T-cell (primary cell): ENCODE measurements at regions of chr2 and their contacts with region 1.

Region 1: DNA sequence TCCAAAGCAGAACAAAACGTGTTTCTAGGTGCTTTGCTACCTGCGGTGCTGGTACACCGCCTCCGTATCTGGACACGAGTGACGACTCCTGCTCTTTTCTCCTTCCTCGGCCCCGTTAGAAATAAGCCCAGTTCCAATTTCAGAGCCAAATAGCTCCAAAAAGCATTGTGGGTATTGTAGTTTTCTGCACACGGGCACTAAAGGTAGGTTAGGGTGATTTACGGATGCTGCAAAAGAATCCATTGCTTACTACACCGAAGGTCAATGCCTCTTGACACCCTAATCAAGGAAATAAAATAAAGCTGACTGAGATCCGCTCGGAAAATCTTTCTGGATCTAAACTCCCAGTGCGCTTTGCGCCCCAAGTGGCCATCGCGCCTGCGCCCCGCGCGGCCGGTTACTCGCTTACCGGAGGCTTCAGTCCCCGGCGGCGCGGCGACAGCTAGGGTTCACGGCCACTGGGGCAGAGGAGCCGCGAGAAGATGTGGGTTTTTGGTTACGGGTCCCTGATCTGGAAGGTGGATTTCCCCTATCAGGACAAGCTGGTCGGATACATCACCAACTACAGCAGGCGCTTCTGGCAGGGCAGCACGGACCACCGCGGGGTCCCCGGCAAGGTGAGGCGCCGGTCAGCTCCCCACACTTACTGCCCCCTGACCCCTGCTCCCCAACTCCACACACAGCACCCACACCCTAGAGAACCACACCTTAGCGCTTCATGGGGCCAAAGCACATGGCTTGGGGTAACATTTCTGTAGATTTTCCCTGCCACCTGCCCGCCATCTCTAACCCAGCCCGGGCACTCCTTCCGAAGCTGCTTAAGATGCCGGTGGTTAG is at the start of gene CHAC2:
- DNase-seq: peak; percentile 61 to 90 (median 82)
- ATAC-seq: peak; percentile 91 to 94 (median 93)
- H3K4me3 ChIP-seq: peak within 1 kb of the TSS; percentile 95
- H3K4me3 Mint-ChIP-seq: peak within 1 kb of the TSS; percentile 93 to 97 (median 93)
- H3K27ac ChIP-seq: peak within 1 kb of the TSS; percentile 90
- H3K27ac Mint-ChIP-seq: peak within 1 kb of the TSS; percentile 88 to 91
- H3K4me1 ChIP-seq: peaks cover 3 to 7% of the 10 kb centered on the region in 2 experiments
- H3K4me1 Mint-ChIP-seq: peaks cover 29 to 37% (median 35%) of the 10 kb centered on the region in 3 donors
- H3K27me3 ChIP-seq: no peaks in the 10 kb centered on the region
- H3K27me3 Mint-ChIP-seq: no peaks in the 10 kb centered on the region
- total RNA-seq, gene CHAC2: 1.4 to 3.7 (median 2.7) TPM

Region 2: DNA sequence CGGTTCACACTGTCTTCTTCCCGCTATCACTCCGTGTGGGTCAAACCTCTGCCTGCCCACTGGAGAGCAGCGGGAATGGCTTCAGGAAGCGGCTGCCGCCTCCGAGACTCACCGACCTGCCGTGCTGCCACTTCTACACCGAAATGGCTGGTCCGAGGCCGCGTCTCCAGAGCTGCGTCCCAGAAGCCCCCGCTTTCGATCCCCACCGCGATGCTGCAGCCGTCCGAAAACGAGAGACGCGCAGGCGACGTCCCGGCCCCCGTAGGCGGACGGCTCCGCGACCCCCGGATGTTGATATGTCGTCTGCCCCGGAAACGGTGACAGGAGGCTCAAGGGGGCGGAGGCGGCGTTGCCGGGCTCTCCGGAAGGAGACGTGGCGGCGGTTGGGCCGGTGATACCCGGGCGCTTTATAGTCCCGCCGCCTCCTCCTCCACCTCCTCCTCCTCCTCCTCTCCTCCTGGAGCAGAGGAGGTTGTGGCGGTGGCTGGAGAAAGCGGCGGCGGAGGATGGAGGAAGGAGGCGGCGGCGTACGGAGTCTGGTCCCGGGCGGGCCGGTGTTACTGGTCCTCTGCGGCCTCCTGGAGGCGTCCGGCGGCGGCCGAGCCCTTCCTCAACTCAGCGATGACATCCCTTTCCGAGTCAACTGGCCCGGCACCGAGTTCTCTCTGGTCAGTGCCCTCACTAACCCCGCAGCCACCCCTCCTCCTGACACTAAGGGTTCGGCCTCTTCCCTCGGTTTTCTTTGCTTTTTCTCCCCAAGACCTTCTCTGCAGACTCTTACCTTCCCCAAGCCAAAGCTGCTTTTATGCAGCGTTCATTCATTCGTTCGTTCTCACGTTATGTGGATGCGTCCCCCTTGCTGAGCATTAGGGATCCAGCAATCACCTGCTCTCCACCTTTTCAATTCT is 19.3 kb after region 1 on chr2 and contains the starts of genes ASB3 and ERLEC1:
- CTCF ChIA-PET with region 1: interaction called in 1 of 2 experiments, 21 read pairs
- POLR2A ChIA-PET with region 1: interaction called, 18 to 27 read pairs
- DNase-seq: peak; percentile 63 to 92 (median 86)
- ATAC-seq: peak; percentile 92 to 94 (median 94)
- H3K4me3 ChIP-seq: peak within 1 kb of the TSS; percentile 76 to 94
- H3K4me3 Mint-ChIP-seq: peak within 1 kb of the TSS; percentile 97 to 99 (median 97)
- H3K27ac ChIP-seq: peak within 1 kb of the TSS; percentile 69
- H3K27ac Mint-ChIP-seq: peak within 1 kb of the TSS; percentile 93 to 95
- H3K4me1 ChIP-seq: peaks cover 12 to 18% of the 10 kb centered on the region in 2 experiments
- H3K4me1 Mint-ChIP-seq: peaks cover 61 to 64% (median 64%) of the 10 kb centered on the region in 3 donors
- H3K27me3 ChIP-seq: no peaks in the 10 kb centered on the region
- H3K27me3 Mint-ChIP-seq: no peaks in the 10 kb centered on the region
- total RNA-seq, gene ASB3: 27.5 to 36.4 (median 30.7) TPM
- total RNA-seq, gene ERLEC1: 16.7 to 28.3 (median 25.2) TPM

Region 3: GRCh38 chr2:53820711-53821110 is 53.1 kb after region 1 on chr2:
- CTCF ChIA-PET with region 1: no interaction called
- POLR2A ChIA-PET with region 1: no interaction called
- DNase-seq: no peak
- ATAC-seq: no peak
- H3K4me3 ChIP-seq: no peak overlapping the region
- H3K4me3 Mint-ChIP-seq: no peak overlapping the region
- H3K27ac ChIP-seq: no peak overlapping the region
- H3K27ac Mint-ChIP-seq: no peak overlapping the region
- H3K4me1 ChIP-seq: no peaks in the 10 kb centered on the region
- H3K4me1 Mint-ChIP-seq: no peaks in the 10 kb centered on the region
- H3K27me3 ChIP-seq: no peaks in the 10 kb centered on the region
- H3K27me3 Mint-ChIP-seq: no peaks in the 10 kb centered on the region

Region 4: DNA sequence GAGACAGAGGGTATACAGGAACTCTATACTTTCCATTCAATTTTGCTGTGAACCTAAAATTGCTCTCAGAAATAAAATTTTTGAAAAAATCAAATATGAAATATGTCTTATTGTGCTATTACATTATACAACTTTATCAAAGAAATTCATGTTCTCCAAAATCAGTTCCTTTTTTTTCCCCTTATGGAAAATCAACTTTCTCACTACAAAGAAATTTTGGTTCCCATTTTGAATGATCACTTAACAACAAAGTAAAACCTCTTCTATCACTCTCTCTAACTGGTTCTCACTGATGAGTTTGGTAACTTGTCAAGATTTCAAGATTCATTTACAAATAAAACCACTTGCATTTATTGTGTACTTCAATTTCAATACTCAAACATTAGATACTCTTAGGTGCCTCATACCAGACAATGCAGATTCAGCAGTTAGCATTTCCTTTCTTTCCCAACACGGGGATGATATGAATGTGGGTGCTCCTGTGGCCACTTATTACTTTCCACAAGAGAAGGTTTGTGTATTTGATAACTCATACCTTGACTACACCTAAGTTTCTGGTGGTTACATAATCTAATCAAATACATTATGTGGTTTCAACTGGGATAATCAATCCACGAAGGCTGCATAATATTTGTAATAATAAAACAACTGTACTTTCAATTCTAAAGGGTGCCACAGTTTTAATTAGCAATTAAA is 196.8 kb after region 1 on chr2:
- CTCF ChIA-PET with region 1: no interaction called
- POLR2A ChIA-PET with region 1: interaction called in 1 of 2 experiments, 10 read pairs
- DNase-seq: no peak
- ATAC-seq: no peak
- H3K4me3 ChIP-seq: no peak overlapping the region
- H3K4me3 Mint-ChIP-seq: peak overlapping the region in 1 of 3 donors; percentile 20
- H3K27ac ChIP-seq: no peak overlapping the region
- H3K27ac Mint-ChIP-seq: peak overlapping the region; percentile 22 to 47
- H3K4me1 ChIP-seq: peaks cover 31 to 47% of the 10 kb centered on the region in 2 experiments
- H3K4me1 Mint-ChIP-seq: peaks cover 83 to 89% (median 85%) of the 10 kb centered on the region in 3 donors
- H3K27me3 ChIP-seq: no peaks in the 10 kb centered on the region
- H3K27me3 Mint-ChIP-seq: no peaks in the 10 kb centered on the region